Posterior cingulate gyrus (tissue), 11 donors: ENCODE measurements at regions of chr20 and their contacts with region 1.

Region 1: DNA sequence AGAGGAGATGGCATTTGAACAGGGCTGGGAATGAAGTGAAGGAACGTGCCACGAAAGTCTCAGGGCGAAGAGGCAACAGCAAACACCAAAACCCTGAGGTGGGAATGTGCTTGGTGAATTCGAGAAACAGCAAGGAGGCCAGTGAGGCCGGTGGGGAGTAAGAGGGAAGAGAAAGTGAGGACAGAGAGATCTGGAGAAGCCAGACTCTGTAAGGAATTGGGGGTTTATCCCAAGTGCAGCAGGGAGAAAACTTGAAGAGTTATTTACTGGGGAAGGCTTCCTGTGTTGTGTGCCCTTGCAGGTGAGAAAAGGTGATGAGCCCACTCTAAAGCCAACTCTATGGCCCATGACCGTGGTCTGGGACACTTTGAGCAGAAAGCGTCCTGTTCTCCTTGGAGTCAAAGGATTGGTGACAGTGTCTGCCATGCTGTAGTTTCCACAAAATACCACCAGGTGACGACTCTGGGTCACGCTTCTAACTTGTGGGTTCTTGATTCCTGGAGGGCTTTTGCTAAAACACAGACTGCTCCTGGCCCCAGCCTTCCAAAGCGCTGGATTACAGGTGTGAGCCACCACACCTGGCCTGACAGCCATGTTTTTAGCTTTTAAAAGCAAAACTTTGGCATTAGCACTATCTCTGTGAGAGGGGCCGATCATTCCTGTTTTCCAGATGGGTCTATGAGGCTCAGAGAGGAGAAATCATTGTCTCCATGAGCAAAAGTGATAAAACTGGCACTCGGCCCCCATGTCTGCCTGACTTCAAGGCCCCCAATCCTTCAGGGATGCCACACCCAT is 18.0 kb upstream of the CSNK2A1 start:
- DNase-seq: peak in 8 of 10 donors; percentile 48 to 93 (median 71)

Region 2: DNA sequence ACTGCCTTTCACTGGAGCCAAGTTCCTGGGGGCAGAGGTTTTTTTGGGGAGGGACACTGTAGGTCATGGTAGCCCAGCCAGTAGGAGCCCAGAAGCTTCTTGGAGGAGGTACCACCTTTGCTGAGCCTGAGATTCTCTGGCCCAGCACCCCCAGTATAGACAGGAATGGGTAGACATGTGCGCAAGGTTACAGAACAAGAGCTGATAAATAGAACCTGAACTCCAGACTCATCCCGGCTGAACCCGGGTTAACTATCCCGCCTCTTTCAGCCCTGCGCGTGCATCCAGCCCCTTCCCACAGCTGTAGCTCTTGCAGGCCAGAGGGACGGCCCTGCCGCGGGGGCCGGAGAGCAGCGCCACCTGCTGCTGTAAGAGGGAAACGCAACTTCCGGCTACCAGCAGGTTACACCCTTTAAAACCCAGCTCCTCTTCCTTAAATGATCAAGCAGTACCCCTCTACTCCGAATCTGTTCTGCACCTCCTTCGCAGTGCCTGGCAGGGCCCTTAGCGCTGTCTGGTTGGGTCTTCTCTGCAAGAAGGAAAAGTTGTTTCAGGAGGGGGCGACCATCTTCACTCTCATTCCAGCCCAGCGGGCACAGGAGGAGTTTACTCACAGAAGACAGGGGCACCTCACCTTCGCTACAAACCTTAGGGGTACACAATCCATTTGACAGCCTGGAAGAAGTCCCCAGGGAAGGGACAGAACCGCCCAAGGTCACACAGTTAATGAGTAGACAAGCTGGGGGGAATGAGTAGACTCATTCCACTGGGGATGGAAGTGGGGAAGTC is 83.9 kb after region 1 on chr20:
- intact Hi-C with region 1: loop called (anchors 2 kb)
- DNase-seq: peak; percentile 46 to 96 (median 72)

Region 3: DNA sequence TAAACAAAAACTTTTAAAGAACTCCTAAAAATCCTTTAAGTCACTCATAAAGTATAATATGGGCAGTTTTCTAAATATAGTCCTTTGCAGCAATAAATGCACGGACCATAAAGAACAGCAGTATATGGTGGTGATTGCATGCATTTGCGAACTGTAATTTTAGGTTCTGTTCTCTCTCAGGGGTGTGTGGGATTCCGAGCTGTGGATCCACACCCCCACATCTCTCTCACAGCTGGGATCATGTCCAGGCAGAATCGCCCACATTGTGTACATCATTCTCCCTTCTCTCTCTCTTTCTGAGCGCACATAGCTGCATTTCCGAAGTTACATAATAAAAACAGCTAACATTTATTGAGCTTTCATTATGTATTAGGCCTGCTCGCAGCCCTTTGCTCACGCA is 178.1 kb after region 1 on chr20:
- intact Hi-C with region 1: loop called (anchors 2 kb)
- DNase-seq: peak in 3 of 10 donors; percentile 46 to 83 (median 50)